Heart left ventricle (tissue), 16 donors: ENCODE measurements at regions of chr14 and their contacts with region 1.

Region 1: GRCh38 chr14:54652188-54652587 is 85.3 kb downstream of the SAMD4A start:
- DNase-seq: peak; percentile 81 to 90 (median 89)
- ATAC-seq: peak; percentile 87 to 93 (median 90)
- H3K4me3 ChIP-seq: peak overlapping the region in 9 of 12 donors; percentile 7 to 47 (median 31)
- H3K27ac ChIP-seq: peak overlapping the region; percentile 82 to 90 (median 86)
- H3K4me1 ChIP-seq: peaks cover 19 to 98% (median 70%) of the 10 kb centered on the region in 12 donors
- H3K27me3 ChIP-seq: no peaks in the 10 kb centered on the region
- CTCF ChIP-seq: no peak
- POLR2A ChIP-seq: no peak

Region 2: DNA sequence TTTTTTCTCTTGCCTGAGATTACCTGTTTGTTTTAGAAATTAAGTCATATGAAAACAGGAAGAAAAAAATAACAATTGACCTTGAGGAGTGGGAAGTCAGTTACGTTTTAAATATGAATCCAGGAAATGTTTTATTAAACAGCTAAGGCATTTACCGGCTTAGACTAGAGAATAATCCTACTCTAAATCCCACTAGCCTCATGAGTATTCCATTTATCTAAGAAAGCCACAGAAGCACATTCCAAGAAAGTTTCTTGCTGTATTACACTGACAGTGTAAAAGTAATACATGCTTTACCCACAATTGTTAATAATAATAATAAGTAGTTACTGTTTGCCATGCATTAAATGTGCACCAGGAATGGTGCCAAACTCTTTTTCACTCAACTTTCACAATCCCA is 786.5 kb before region 1 on chr14:
- intact Hi-C with region 1: no loop called
- DNase-seq: no peak
- ATAC-seq: no peak
- H3K4me3 ChIP-seq: no peak overlapping the region
- H3K27ac ChIP-seq: no peak overlapping the region
- H3K4me1 ChIP-seq: peaks cover 0 to 9% (median 0%) of the 10 kb centered on the region in 12 donors
- H3K27me3 ChIP-seq: no peaks in the 10 kb centered on the region
- CTCF ChIP-seq: no peak
- POLR2A ChIP-seq: no peak

Region 3: GRCh38 chr14:54674046-54674741 is 22.0 kb after region 1 on chr14:
- intact Hi-C with region 1: loop called in 1 of 10 experiments (anchors 2 kb)
- DNase-seq: no peak
- ATAC-seq: no peak
- H3K4me3 ChIP-seq: no peak overlapping the region
- H3K27ac ChIP-seq: peak overlapping the region; percentile 45 to 90 (median 84)
- H3K4me1 ChIP-seq: peaks cover 11 to 93% (median 72%) of the 10 kb centered on the region in 12 donors
- H3K27me3 ChIP-seq: no peaks in the 10 kb centered on the region
- CTCF ChIP-seq: no peak
- POLR2A ChIP-seq: no peak

Region 4: DNA sequence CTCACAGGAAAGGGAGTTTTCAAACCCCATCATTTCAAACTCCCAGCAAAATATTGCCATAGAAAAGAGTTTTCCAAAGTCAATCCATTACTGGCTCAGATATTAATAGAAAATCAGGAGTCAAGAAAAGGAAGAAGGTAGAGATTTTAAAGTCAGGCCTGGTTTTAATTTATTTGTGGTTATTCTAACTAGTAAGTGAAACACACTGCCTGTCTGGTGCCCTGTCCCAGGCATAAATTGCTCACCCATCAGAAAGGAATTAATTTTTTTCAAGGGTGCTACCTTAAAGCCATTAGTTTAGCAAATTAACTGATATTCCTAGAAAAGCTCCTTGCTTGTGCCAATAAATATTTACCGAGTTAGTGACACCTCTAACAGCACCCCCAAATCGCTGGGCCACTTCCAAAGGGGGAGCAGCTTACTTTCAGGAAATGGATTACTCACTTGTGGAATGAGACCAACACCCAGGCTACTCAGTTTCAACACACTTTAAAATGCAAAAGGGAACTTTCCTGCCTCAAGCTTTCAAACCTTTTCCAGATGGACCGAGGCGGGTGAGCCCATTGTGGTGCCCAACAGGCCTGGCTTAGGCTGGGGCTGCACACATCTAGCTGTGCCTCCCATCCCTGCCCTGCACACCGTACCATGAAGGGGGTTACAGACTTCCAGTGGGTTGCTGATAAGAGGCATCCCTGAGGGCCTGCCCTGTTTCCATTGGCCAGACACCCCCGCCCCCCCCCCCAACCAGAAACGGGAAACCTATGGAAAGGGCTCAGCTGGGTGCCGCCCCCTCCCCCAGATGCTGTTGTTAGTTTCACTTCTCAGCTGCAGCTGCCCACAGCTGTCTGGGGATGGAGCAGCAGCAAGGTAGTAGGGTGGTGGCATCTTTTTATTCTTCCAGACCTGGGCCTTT is 31.9 kb after region 1 on chr14:
- intact Hi-C with region 1: loop called in 5 of 10 experiments (anchors 2 to 5 kb)
- DNase-seq: peak in 3 of 5 donors; percentile 31 to 56 (median 48)
- ATAC-seq: peak in 2 of 4 donors; percentile 6 to 14
- H3K4me3 ChIP-seq: no peak overlapping the region
- H3K27ac ChIP-seq: peak overlapping the region in 11 of 12 donors; percentile 79 to 95 (median 87)
- H3K4me1 ChIP-seq: peaks cover 19 to 95% (median 74%) of the 10 kb centered on the region in 12 donors
- H3K27me3 ChIP-seq: no peaks in the 10 kb centered on the region
- CTCF ChIP-seq: no peak
- POLR2A ChIP-seq: no peak

Region 5: GRCh38 chr14:54691525-54692283 is 39.5 kb after region 1 on chr14:
- intact Hi-C with region 1: loop called in 5 of 10 experiments (anchors 5 kb)
- DNase-seq: peak; percentile 80 to 86 (median 84)
- ATAC-seq: peak; percentile 67 to 82 (median 74)
- H3K4me3 ChIP-seq: no peak overlapping the region
- H3K27ac ChIP-seq: peak overlapping the region; percentile 44 to 94 (median 70)
- H3K4me1 ChIP-seq: peaks cover 3 to 81% (median 48%) of the 10 kb centered on the region in 12 donors
- H3K27me3 ChIP-seq: no peaks in the 10 kb centered on the region
- CTCF ChIP-seq: peak; percentile 84 to 92 (median 88)
- POLR2A ChIP-seq: no peak